ENCODE measurements at regions of chr9 and their contacts with region 1.

Region 1: GRCh38 chr9:93108291-93109041 is 12.4 kb downstream of the CARD19 start:
- DNase-seq: no peak
- ATAC-seq: no peak
- H3K4me3 ChIP-seq: no peak overlapping the region
- H3K27ac ChIP-seq: no peak overlapping the region
- H3K4me1 ChIP-seq: peaks cover 44% of the 10 kb centered on the region
- H3K27me3 ChIP-seq: no peaks in the 10 kb centered on the region
- CTCF ChIP-seq: no peak
- EP300 ChIP-seq: no peak
- POLR2A ChIP-seq: no peak
- RAD21 ChIP-seq: no peak

Region 2: DNA sequence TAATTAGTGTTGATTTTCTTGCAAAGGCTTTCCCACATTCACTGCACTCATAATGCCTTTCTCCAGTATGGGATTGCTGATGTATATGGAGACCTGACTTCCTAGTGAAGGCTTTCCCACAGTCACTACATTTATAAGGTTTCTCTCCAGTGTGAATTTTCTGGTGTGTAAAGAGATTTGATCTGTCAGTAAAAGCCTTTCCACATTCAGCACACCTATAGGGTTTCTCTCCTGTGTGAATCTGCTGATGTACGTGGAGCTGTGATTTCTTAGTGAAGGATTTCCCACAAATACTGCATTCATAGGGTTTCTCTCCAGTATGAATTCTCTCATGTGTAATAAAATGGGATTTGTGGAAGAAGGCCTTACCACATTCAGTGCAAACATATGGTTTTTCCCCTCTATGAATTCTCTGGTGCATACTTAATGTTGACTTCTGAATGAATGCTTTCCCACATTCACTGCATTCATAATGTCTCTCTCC is 261.8 kb before region 1 on chr9:
- CTCF ChIA-PET with region 1: no interaction called
- POLR2A ChIA-PET with region 1: no interaction called
- in situ Hi-C with region 1: no loop called
- intact Hi-C with region 1: no loop called
- DNase-seq: no peak
- ATAC-seq: no peak
- H3K4me3 ChIP-seq: no peak overlapping the region
- H3K27ac ChIP-seq: no peak overlapping the region
- H3K4me1 ChIP-seq: no peaks in the 10 kb centered on the region
- H3K27me3 ChIP-seq: no peaks in the 10 kb centered on the region
- CTCF ChIP-seq: no peak
- EP300 ChIP-seq: no peak
- POLR2A ChIP-seq: no peak
- RAD21 ChIP-seq: no peak

Region 3: DNA sequence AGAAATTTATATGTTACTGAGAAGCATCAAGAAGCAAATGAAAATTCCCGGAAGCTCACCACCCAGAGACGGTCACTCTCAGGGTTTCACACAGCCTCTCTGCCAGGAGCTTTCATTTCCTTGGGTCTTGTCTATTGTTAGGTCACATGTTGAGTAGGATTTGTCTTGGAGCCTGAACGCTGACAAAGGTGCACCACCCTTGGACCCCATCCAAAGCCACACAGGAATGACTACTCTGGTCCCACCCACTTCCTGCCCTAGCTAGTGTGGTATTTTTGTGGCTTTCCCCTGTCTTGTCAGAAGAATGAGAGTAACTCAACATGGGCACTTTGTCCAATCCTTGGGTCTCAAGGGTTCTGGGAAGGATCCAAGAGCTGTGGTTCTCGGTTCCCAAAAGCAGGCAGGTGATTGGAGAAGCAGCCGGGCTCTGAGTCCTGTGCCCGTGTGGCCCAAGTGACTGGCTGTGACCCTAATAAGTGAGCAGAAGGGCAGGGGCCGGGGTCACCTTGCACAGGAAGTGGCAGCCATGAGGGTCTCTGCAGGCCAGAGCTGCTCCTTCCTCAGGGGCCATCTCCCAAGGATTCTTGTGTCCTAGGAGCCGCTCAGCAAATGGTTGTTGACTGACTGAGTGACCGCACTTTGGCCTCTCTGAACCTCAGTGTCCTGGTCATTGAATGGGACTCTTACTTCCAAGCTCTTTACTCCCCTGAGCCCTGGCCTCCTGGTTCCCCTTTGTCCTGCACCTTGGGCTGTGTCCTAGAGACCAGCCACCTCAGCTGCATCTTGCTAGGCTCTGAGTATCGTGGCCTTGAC is 154.2 kb before region 1 on chr9:
- CTCF ChIA-PET with region 1: no interaction called
- POLR2A ChIA-PET with region 1: no interaction called
- in situ Hi-C with region 1: no loop called
- intact Hi-C with region 1: loop called (anchors 1 kb)
- DNase-seq: no peak
- ATAC-seq: no peak
- H3K4me3 ChIP-seq: no peak overlapping the region
- H3K27ac ChIP-seq: no peak overlapping the region
- H3K4me1 ChIP-seq: peaks cover 8% of the 10 kb centered on the region; the same call in 1 of the 2 replicates
- H3K27me3 ChIP-seq: peaks cover 3 to 40% of the 10 kb centered on the region in 2 experiments; a peak in 3 of 5 replicates
- CTCF ChIP-seq: no peak
- EP300 ChIP-seq: no peak
- POLR2A ChIP-seq: no peak
- RAD21 ChIP-seq: no peak

Region 4: DNA sequence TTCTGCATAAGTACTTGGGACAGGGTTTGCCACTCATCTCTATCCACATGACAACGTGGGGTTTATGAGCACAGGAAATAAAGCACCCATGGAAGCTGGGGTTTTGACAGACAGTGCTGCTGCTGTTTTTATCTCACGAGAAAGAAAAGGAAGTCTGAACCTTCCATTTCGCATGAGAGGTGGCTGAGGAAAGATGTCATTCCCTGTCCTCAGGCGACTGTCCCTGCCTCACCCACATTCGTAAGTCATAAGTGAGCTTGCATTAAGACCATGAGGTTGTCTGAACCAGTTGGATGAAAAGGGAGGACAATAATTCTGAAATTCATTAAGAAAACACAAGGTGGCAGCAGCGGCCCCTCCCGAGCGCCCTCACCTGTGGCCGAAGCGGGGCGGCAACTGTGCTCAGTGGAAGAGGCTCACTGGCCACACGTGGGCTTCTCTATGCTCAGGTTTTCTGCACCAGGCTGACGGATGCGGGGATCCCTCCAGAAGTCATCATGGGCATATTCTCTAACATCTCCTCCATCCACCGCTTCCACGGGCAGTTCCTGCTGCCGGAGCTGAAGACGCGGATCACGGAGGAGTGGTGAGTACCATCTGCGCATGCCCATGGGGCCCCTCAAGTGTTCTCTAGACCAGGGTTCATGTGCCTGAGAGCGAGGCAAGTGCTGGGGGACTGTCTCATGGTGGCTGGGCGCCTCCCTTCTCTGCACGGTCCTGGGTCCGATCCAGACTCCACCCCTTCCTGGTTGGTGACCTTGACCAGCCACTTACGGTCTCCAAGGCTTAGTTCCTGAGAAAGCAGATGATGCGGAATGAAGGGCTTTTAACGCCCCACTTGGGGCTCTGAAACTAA is 104.7 kb before region 1 on chr9:
- CTCF ChIA-PET with region 1: interaction called, 4 read pairs
- POLR2A ChIA-PET with region 1: no interaction called
- in situ Hi-C with region 1: no loop called
- intact Hi-C with region 1: loop called (anchors 5 kb)
- DNase-seq: peak; percentile 41
- ATAC-seq: peak; percentile 95
- H3K4me3 ChIP-seq: no peak overlapping the region
- H3K27ac ChIP-seq: no peak overlapping the region
- H3K4me1 ChIP-seq: peaks cover 15% of the 10 kb centered on the region
- H3K27me3 ChIP-seq: no peaks in the 10 kb centered on the region
- CTCF ChIP-seq: peak; percentile 88
- EP300 ChIP-seq: no peak
- POLR2A ChIP-seq: no peak
- RAD21 ChIP-seq: peak; percentile 73

Region 5: GRCh38 chr9:93037476-93037971 is 70.9 kb before region 1 on chr9:
- CTCF ChIA-PET with region 1: no interaction called
- POLR2A ChIA-PET with region 1: no interaction called
- in situ Hi-C with region 1: no loop called
- intact Hi-C with region 1: loop called (anchors 2 kb)
- DNase-seq: no peak
- ATAC-seq: no peak
- H3K4me3 ChIP-seq: no peak overlapping the region
- H3K27ac ChIP-seq: no peak overlapping the region
- H3K4me1 ChIP-seq: peaks cover 7% of the 10 kb centered on the region
- H3K27me3 ChIP-seq: peaks cover 0 to 3% of the 10 kb centered on the region in 2 experiments; a peak in 1 of 5 replicates
- CTCF ChIP-seq: no peak
- EP300 ChIP-seq: no peak
- POLR2A ChIP-seq: no peak
- RAD21 ChIP-seq: no peak

Region 6: DNA sequence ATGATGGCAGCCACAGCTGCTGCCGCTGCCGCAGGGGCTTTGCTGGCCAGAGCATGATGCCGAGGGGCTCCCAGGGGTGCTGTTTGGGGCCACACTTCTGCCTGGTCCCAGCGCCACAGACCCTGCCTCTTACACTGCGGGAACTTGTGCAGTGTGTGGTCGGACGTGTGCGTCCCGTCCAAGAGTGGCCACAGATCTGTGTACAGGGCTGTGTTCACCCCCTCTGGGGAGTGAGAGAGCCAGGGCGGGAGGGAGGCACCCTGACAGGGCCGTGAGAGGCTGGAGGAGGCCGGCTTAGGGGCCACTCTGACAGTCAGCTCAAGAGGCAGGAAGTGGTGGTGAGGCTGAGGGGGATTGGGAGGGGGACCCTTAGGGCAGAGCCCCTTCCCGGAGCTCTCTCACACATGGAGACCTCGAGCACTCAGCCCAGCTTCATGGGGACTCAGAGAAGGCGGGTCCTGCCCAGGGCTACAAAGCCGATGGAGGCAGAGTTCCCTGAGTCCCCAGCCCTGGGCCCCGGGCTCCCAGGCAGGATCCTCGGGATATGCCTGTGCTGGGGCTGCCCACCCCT is 25.5 kb before region 1 on chr9:
- CTCF ChIA-PET with region 1: no interaction called
- POLR2A ChIA-PET with region 1: no interaction called
- in situ Hi-C with region 1: no loop called
- intact Hi-C with region 1: no loop called
- DNase-seq: no peak
- ATAC-seq: no peak; the same call in 2 of the 3 replicates
- H3K4me3 ChIP-seq: no peak overlapping the region
- H3K27ac ChIP-seq: no peak overlapping the region
- H3K4me1 ChIP-seq: peaks cover 8% of the 10 kb centered on the region
- H3K27me3 ChIP-seq: no peaks in the 10 kb centered on the region; a peak in 1 of 5 replicates
- CTCF ChIP-seq: no peak
- EP300 ChIP-seq: no peak
- POLR2A ChIP-seq: no peak
- RAD21 ChIP-seq: no peak

Region 7: GRCh38 chr9:93134015-93134739 is 25.7 kb after region 1 on chr9 and contains the start of gene NINJ1:
- CTCF ChIA-PET with region 1: no interaction called
- POLR2A ChIA-PET with region 1: interaction called, 195 read pairs
- in situ Hi-C with region 1: no loop called
- intact Hi-C with region 1: no loop called
- DNase-seq: peak; percentile 40
- ATAC-seq: peak; percentile 81
- H3K4me3 ChIP-seq: peak within 1 kb of the TSS; percentile 85 to 96 (median 92)
- H3K27ac ChIP-seq: peak within 1 kb of the TSS; percentile 99
- H3K4me1 ChIP-seq: peaks cover 77% of the 10 kb centered on the region
- H3K27me3 ChIP-seq: peaks cover 1 to 6% of the 10 kb centered on the region in 2 experiments; a peak in 1 of 5 replicates
- CTCF ChIP-seq: peak; percentile 5; the same call in 1 of the 2 replicates
- EP300 ChIP-seq: no peak
- POLR2A ChIP-seq: peak in 1 of 2 experiments; percentile 95; a peak in 2 of 4 replicates
- RAD21 ChIP-seq: peak; percentile 42; the same call in 1 of the 2 replicates
- total RNA-seq, gene NINJ1: 77.1 and 92.1 TPM in 2 replicates

Region 8: DNA sequence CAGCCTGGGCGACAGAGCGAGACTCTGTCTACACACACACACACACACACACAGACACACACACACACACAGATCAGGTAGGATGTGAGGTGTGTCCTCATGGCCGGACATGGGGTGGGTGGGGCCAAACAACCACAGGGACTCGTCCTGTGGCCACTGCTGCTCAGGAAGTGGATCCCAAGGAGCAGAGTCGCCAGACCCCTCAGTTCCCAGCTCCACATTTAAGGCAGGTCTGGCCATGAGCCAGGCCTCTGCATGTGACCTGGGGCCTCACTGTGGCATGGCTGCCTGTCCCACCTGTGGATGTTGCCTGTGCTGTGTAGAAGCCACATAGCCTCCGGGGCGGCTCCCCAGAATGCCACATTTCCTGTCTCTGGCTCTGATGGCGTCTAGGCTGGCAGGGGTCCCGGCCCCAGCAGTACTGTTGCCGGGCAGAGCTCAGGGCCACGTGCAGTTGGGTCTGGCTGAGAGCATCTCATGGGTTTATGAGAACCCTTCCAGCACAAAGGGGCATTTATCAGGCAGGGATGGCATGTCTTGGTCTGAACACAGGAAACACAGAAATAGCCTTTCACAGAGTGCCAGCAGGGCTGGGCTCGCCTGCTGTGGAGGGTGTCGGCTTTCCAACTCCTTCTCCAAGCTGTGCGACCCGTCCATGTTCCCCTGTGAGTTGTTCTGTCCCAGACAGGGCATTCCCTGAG is 35.5 kb after region 1 on chr9:
- CTCF ChIA-PET with region 1: no interaction called
- POLR2A ChIA-PET with region 1: interaction called, 3 read pairs
- in situ Hi-C with region 1: no loop called
- intact Hi-C with region 1: loop called (anchors 5 kb)
- DNase-seq: no peak
- ATAC-seq: peak; percentile 21; the same call in 2 of the 3 replicates
- H3K4me3 ChIP-seq: peak overlapping the region in 1 of 3 experiments; percentile 7; a peak in 1 of 6 replicates
- H3K27ac ChIP-seq: no peak overlapping the region
- H3K4me1 ChIP-seq: peaks cover 52% of the 10 kb centered on the region
- H3K27me3 ChIP-seq: peaks cover 0 to 1% of the 10 kb centered on the region in 2 experiments; a peak in 1 of 5 replicates
- CTCF ChIP-seq: no peak
- EP300 ChIP-seq: no peak
- POLR2A ChIP-seq: no peak
- RAD21 ChIP-seq: no peak